HCT116 (cell line): ENCODE measurements at regions of chr10 and their contacts with region 1.

Region 1: DNA sequence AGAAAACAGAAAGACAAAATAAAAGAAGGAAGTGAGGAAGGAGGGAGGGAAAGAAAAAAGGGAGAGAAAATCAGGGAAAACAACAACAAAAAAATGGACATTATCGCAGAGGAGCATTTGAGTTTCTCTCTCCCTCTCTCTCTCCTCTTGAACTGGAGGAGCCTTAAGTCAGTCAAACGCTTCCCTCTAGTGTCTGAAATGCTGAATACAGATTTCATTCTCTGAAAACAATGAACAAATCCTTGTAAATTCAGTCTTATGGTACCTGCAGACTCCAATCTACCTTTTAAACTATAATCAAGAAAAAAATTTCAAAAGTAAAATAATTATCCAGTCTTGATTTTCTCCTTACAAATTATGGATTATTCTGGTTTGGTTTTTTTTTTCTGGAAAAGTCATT is 89.2 kb upstream of the PFKP start:
- DNase-seq: peak; percentile 55
- ATAC-seq: peak; percentile 67
- H3K4me3 ChIP-seq: no peak overlapping the region
- H3K27ac ChIP-seq: no peak overlapping the region
- H3K4me1 ChIP-seq: peaks cover 0 to 13% of the 10 kb centered on the region in 2 experiments; a peak in 2 of 4 replicates
- H3K27me3 ChIP-seq: no peaks in the 10 kb centered on the region
- CTCF ChIP-seq: peak; percentile 39 to 64 (median 56); a peak in 3 of 6 replicates
- POLR2A ChIP-seq: no peak
- RAD21 ChIP-seq: peak; percentile 76

Region 2: GRCh38 chr10:2839081-2839725 is 138.9 kb before region 1 on chr10:
- CTCF ChIA-PET with region 1: no interaction called
- POLR2A ChIA-PET with region 1: no interaction called
- RAD21 ChIA-PET with region 1: no interaction called
- intact Hi-C with region 1: loop called (anchors 2 kb)
- DNase-seq: no peak
- ATAC-seq: peak; percentile 93
- H3K4me3 ChIP-seq: no peak overlapping the region
- H3K27ac ChIP-seq: no peak overlapping the region
- H3K4me1 ChIP-seq: no peaks in the 10 kb centered on the region
- H3K27me3 ChIP-seq: peaks cover 29% of the 10 kb centered on the region; the same call in 1 of the 2 replicates
- CTCF ChIP-seq: peak; percentile 60 to 83 (median 80); a peak in 5 of 6 replicates
- POLR2A ChIP-seq: no peak
- RAD21 ChIP-seq: peak; percentile 58

Region 3: DNA sequence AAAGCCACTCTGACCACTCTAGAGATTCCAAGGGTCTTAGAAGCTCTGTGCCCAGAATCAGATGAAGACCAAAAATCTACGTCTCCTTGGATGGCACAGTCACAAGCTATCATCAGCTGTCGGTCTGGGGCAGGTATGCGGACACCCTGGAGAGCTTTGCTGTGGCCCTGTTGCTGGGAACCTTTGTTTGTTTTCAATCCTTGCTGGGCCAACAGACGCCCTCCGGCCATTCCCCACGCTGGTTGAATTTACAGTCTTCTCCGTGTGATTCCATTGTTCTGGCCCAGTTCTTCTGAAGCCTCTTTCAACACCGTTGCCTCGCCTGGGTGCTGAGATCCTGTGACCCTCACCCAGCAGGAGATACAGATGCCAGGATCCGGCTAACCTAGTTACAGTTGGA is 60.2 kb before region 1 on chr10:
- CTCF ChIA-PET with region 1: no interaction called
- POLR2A ChIA-PET with region 1: no interaction called
- RAD21 ChIA-PET with region 1: no interaction called
- intact Hi-C with region 1: no loop called
- DNase-seq: no peak
- ATAC-seq: no peak
- H3K4me3 ChIP-seq: no peak overlapping the region
- H3K27ac ChIP-seq: no peak overlapping the region
- H3K4me1 ChIP-seq: no peaks in the 10 kb centered on the region
- H3K27me3 ChIP-seq: peaks cover 31% of the 10 kb centered on the region; the same call in 1 of the 2 replicates
- CTCF ChIP-seq: no peak
- POLR2A ChIP-seq: no peak
- RAD21 ChIP-seq: no peak

Region 4: GRCh38 chr10:2927958-2928840 is 49.9 kb before region 1 on chr10:
- CTCF ChIA-PET with region 1: interaction called, 17 read pairs
- POLR2A ChIA-PET with region 1: no interaction called
- RAD21 ChIA-PET with region 1: no interaction called
- intact Hi-C with region 1: loop called (anchors 1 kb)
- DNase-seq: peak; percentile 51
- ATAC-seq: peak; percentile 95
- H3K4me3 ChIP-seq: peak overlapping the region; percentile 7 to 17; a peak in 2 of 4 replicates
- H3K27ac ChIP-seq: no peak overlapping the region
- H3K4me1 ChIP-seq: 0 out of 4 replicates have a peak, but pooled peaks cover 0 to 3% of the 10 kb centered on the region in 2 experiments
- H3K27me3 ChIP-seq: peaks cover 31% of the 10 kb centered on the region
- CTCF ChIP-seq: peak; percentile 58 to 85 (median 82); a peak in 5 of 6 replicates
- POLR2A ChIP-seq: no peak
- RAD21 ChIP-seq: peak; percentile 86

Region 5: DNA sequence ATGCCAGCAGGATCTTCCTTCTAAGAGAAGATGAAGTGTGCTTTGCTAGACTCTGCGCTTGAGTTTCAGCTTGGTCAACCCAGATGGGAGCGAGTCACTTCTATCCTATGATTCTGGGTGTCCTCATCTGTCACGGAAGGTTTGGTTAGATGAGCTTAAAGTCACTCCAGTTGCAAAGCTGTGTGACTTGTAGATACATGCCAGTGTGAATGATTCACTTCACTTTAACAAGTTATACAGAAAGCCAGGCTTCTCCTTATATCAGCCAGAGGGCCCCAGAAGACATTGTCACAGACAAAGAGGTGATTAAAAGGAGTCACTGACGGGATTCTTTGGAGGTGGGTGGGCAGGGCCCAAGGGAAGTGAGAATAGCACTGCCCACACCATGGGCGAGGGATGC is 33.3 kb before region 1 on chr10:
- CTCF ChIA-PET with region 1: no interaction called
- POLR2A ChIA-PET with region 1: no interaction called
- RAD21 ChIA-PET with region 1: no interaction called
- intact Hi-C with region 1: loop called (anchors 5 kb)
- DNase-seq: no peak
- ATAC-seq: no peak
- H3K4me3 ChIP-seq: no peak overlapping the region
- H3K27ac ChIP-seq: no peak overlapping the region
- H3K4me1 ChIP-seq: peaks cover 0 to 1% of the 10 kb centered on the region in 2 experiments; a peak in 1 of 4 replicates
- H3K27me3 ChIP-seq: peaks cover 47% of the 10 kb centered on the region
- CTCF ChIP-seq: no peak
- POLR2A ChIP-seq: no peak
- RAD21 ChIP-seq: no peak